Activated T-helper 2 cell treated with anti-CD3 and anti-CD28 coated beads, Interferon-gamma antibody, Interleukin-2, Interleukin-4, amounts not matched to agents 10 μg/mL and 5 μg/mL and 100 μg/mL, durations not matched to agents 14 hours and 24 hours and 36 hours (primary cell): ENCODE measurements at regions of chr5 and their contacts with region 1.

Region 1: DNA sequence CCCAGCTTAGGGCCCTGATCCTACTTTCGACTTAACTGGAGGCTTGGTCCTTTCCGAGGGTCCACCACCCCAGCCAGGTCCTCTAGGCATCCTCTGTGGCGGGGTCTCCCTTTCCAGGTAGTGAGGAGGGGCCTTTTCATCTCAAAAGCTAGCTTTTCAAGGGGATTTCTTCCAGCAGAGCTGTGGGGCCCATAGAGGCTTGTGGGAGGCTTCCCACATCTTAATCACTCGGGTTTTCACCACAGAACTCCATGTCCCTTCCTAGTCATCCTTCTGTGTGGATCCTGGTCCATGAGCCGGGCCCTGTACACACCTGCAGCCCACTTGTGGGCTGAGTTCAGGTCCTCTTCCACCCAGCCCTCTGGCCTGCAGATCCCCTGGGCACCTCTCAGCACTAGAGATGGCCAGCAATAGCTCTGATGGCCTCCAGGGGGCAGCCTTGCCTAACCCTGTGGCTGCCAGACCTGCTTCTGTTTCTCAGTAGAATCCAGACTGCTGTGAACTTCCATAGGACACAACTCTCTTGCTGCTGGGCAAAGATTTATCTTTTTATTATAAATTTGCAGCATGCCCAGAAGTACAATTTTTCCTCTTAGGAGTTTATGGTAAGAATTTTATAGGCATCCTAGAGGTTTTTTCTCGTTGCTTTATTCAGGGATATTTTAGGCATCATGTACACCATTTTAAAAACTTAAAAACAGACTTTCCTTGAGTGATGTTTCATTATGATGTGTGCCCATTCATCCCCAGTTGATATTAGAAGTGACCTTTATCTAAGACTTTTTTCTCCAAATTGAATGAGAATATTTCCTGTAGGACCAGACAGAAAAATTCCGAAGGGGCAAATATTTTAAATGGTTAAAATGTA is 208.9 kb downstream of the TRIO start:
- DNase-seq: peak; percentile 33
- H3K4me3 Mint-ChIP-seq: no peak overlapping the region
- H3K27ac Mint-ChIP-seq: no peak overlapping the region
- H3K4me1 Mint-ChIP-seq: no peaks in the 10 kb centered on the region
- H3K27me3 Mint-ChIP-seq: peaks cover 6% of the 10 kb centered on the region

Region 2: DNA sequence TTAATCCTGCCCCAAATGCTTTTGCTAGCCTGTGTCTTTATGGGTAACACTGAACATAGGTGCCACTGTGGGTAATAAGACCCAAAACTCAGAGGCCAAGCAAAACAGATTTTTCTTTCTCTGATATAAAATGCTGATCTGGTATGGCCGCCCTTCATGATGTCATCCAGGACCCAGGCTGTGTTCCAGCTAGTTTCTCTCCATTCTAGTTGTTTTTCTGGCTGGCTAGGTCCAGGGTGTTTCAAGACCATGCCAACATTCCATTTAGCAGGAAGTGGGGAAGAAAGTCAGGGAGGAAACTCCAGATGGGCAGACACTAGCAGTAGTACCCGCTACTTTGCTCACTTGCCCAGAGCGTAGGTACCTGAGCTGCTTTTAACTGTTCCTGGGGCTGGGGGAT is 45.6 kb after region 1 on chr5:
- intact Hi-C with region 1: no loop called
- DNase-seq: no peak
- H3K4me3 Mint-ChIP-seq: no peak overlapping the region
- H3K27ac Mint-ChIP-seq: no peak overlapping the region
- H3K4me1 Mint-ChIP-seq: peaks cover 33% of the 10 kb centered on the region
- H3K27me3 Mint-ChIP-seq: peaks cover 2% of the 10 kb centered on the region

Region 3: DNA sequence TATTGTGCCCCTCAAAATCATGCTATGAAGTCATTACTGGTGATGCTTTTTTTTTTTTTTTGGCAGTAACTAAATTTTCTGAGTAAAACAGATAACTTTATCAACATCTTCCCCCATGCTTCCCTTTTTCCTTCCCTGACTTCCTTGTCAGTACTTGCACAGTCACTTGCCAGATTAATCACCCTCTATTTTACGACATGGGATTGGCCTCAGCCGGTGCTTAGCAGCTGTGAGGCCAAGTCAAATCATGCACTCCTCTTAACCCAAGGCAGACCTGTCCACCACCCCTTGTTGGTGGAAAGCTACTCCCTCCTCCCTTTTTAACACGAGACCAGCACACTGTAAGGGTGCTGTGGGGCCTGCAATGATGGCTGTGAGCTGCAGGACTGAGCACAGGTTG is 111.5 kb after region 1 on chr5:
- intact Hi-C with region 1: no loop called
- DNase-seq: no peak
- H3K4me3 Mint-ChIP-seq: no peak overlapping the region
- H3K27ac Mint-ChIP-seq: no peak overlapping the region
- H3K4me1 Mint-ChIP-seq: peaks cover 8% of the 10 kb centered on the region
- H3K27me3 Mint-ChIP-seq: peaks cover 1% of the 10 kb centered on the region

Region 4: GRCh38 chr5:15014809-15015208 is 662.7 kb after region 1 on chr5:
- intact Hi-C with region 1: loop called (anchors 5 kb)
- DNase-seq: no peak
- H3K4me3 Mint-ChIP-seq: no peak overlapping the region
- H3K27ac Mint-ChIP-seq: no peak overlapping the region
- H3K4me1 Mint-ChIP-seq: no peaks in the 10 kb centered on the region
- H3K27me3 Mint-ChIP-seq: peaks cover 3% of the 10 kb centered on the region